Transverse colon (tissue), 4 donors: ENCODE measurements at regions of chr1 and their contacts with region 1.

Region 1: GRCh38 chr1:182092336-182092735 is 30.8 kb upstream of the ZNF648 start:
- DNase-seq: no peak
- H3K4me3 ChIP-seq: no peak overlapping the region
- H3K27ac ChIP-seq: no peak overlapping the region
- H3K4me1 ChIP-seq: no peaks in the 10 kb centered on the region
- H3K27me3 ChIP-seq: no peaks in the 10 kb centered on the region
- CTCF ChIP-seq: no peak
- EP300 ChIP-seq: no peak
- POLR2A ChIP-seq: no peak

Region 2: GRCh38 chr1:181898773-181899172 is 193.6 kb before region 1 on chr1:
- in situ Hi-C with region 1: no loop called
- intact Hi-C with region 1: no loop called
- DNase-seq: no peak
- H3K4me3 ChIP-seq: no peak overlapping the region
- H3K27ac ChIP-seq: no peak overlapping the region
- H3K4me1 ChIP-seq: no peaks in the 10 kb centered on the region
- H3K27me3 ChIP-seq: no peaks in the 10 kb centered on the region
- CTCF ChIP-seq: no peak
- EP300 ChIP-seq: no peak
- POLR2A ChIP-seq: no peak

Region 3: GRCh38 chr1:182229921-182230491 is 137.7 kb after region 1 on chr1:
- in situ Hi-C with region 1: no loop called
- intact Hi-C with region 1: no loop called
- DNase-seq: no peak
- H3K4me3 ChIP-seq: no peak overlapping the region
- H3K27ac ChIP-seq: no peak overlapping the region
- H3K4me1 ChIP-seq: peaks cover 0 to 5% (median under 1%) of the 10 kb centered on the region in 4 donors
- H3K27me3 ChIP-seq: no peaks in the 10 kb centered on the region
- CTCF ChIP-seq: no peak
- EP300 ChIP-seq: no peak
- POLR2A ChIP-seq: no peak

Region 4: GRCh38 chr1:182588500-182589452 is 496.4 kb after region 1 on chr1 and contains the start of gene RNASEL:
- in situ Hi-C with region 1: loop called (anchors 10 to 25 kb)
- intact Hi-C with region 1: no loop called
- DNase-seq: peak; percentile 86
- H3K4me3 ChIP-seq: peak within 1 kb of the TSS; percentile 71 to 87 (median 81)
- H3K27ac ChIP-seq: peak within 1 kb of the TSS; percentile 97 to 99 (median 98)
- H3K4me1 ChIP-seq: peaks cover 8 to 34% (median 19%) of the 10 kb centered on the region in 4 donors
- H3K27me3 ChIP-seq: no peaks in the 10 kb centered on the region
- CTCF ChIP-seq: no peak
- EP300 ChIP-seq: no peak
- POLR2A ChIP-seq: peak; percentile 78
- total RNA-seq, gene RNASEL: 9.0 to 19.9 (median 15.4) TPM